Transverse colon (tissue), 4 donors: ENCODE measurements at regions of chr4 and their contacts with region 1.

Region 1: DNA sequence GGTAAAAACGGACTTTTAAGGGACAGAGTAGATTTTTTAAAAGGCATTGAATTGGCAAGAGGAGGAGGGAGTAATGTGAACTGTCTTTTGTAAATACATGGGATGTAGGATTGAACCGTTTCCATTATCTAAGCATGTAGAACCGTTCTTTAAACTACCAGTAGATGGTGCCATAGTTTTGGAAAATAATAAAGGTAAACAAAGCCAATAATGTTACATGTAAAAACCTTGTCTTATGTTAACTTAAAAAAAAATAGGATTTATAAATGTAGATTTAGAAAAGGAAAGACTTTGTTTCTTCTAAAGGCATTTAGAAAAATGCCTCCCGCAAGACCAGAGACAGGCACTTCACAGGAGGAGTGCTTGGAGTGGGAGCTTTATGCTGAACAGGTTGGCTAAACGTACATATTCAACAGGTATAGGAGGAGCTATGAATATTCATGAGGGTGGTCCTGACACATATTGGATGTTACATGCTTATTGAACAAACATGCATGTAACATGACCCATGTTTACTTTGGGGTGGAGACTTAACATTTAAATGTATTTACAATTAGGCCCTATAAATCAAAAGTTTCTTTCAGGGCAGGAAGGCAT is 45.5 kb upstream of the FAM241A start:
- DNase-seq: no peak
- H3K4me3 ChIP-seq: no peak overlapping the region
- H3K27ac ChIP-seq: no peak overlapping the region
- H3K4me1 ChIP-seq: peaks cover 0 to 5% (median 0%) of the 10 kb centered on the region in 4 donors
- H3K27me3 ChIP-seq: no peaks in the 10 kb centered on the region
- CTCF ChIP-seq: peak; percentile 58 to 65 (median 64)
- EP300 ChIP-seq: no peak
- POLR2A ChIP-seq: no peak

Region 2: GRCh38 chr4:112003231-112003907 is 96.4 kb before region 1 on chr4:
- in situ Hi-C with region 1: no loop called
- intact Hi-C with region 1: no loop called
- DNase-seq: no peak
- H3K4me3 ChIP-seq: no peak overlapping the region
- H3K27ac ChIP-seq: no peak overlapping the region
- H3K4me1 ChIP-seq: peaks cover 0 to 3% (median 0%) of the 10 kb centered on the region in 4 donors
- H3K27me3 ChIP-seq: no peaks in the 10 kb centered on the region
- CTCF ChIP-seq: no peak
- EP300 ChIP-seq: no peak
- POLR2A ChIP-seq: no peak

Region 3: GRCh38 chr4:112214390-112215264 is 114.8 kb after region 1 on chr4:
- in situ Hi-C with region 1: loop called in 1 of 4 experiments (anchors 25 kb)
- intact Hi-C with region 1: no loop called
- DNase-seq: no peak
- H3K4me3 ChIP-seq: no peak overlapping the region
- H3K27ac ChIP-seq: no peak overlapping the region
- H3K4me1 ChIP-seq: no peaks in the 10 kb centered on the region
- H3K27me3 ChIP-seq: no peaks in the 10 kb centered on the region
- CTCF ChIP-seq: peak; percentile 50 to 84 (median 54)
- EP300 ChIP-seq: no peak
- POLR2A ChIP-seq: no peak

Region 4: GRCh38 chr4:112231779-112232713 is 132.2 kb after region 1 on chr4 and contains the start of gene AP1AR:
- in situ Hi-C with region 1: loop called in 3 of 4 experiments (anchors 5 to 25 kb)
- intact Hi-C with region 1: loop called (anchors 2 kb)
- DNase-seq: peak; percentile 89
- H3K4me3 ChIP-seq: peak within 1 kb of the TSS; percentile 68 to 90 (median 75)
- H3K27ac ChIP-seq: peak within 1 kb of the TSS; percentile 95 to 100 (median 98)
- H3K4me1 ChIP-seq: peaks cover 0 to 35% (median 18%) of the 10 kb centered on the region in 4 donors
- H3K27me3 ChIP-seq: no peaks in the 10 kb centered on the region
- CTCF ChIP-seq: peak in 4 of 5 experiments; percentile 30 to 48 (median 38)
- EP300 ChIP-seq: no peak
- POLR2A ChIP-seq: peak; percentile 97
- total RNA-seq, gene AP1AR: 9.8 to 41.8 (median 38.7) TPM

Region 5: GRCh38 chr4:112431158-112431557 is 331.4 kb after region 1 on chr4:
- in situ Hi-C with region 1: no loop called
- intact Hi-C with region 1: no loop called
- DNase-seq: no peak
- H3K4me3 ChIP-seq: no peak overlapping the region
- H3K27ac ChIP-seq: no peak overlapping the region
- H3K4me1 ChIP-seq: no peaks in the 10 kb centered on the region
- H3K27me3 ChIP-seq: no peaks in the 10 kb centered on the region
- CTCF ChIP-seq: no peak
- EP300 ChIP-seq: no peak
- POLR2A ChIP-seq: no peak